ENCODE measurements at regions of chr17 and their contacts with region 1.

Region 1: GRCh38 chr17:13442361-13442760 is 159.4 kb downstream of the HS3ST3A1 start:
- DNase-seq: no peak
- ATAC-seq: no peak
- H3K4me3 ChIP-seq: no peak overlapping the region
- H3K27ac ChIP-seq: no peak overlapping the region
- H3K4me1 ChIP-seq: no peaks in the 10 kb centered on the region
- H3K27me3 ChIP-seq: no peaks in the 10 kb centered on the region
- CTCF ChIP-seq: no peak
- POLR2A ChIP-seq: no peak

Region 2: DNA sequence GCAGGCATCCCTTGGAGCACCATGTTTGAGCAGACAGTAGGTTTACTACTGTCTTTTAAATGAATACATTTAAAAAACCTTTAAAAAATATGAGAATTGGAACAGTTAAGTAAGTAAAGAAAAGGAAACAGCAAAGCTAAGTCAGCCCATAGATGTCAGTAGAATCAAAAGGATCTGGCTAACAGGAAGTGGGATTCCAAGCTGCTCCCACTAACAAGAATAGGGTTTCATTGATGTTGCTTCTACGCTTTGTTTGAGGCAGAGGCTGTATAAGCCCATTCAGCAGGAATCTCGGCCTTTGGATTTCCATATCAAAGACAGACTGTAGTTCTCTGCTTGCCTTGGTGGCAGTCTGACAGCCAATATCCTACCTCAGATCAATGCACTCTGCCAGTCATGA is 301.6 kb before region 1 on chr17:
- in situ Hi-C with region 1: no loop called
- intact Hi-C with region 1: no loop called
- DNase-seq: no peak
- ATAC-seq: no peak
- H3K4me3 ChIP-seq: no peak overlapping the region
- H3K27ac ChIP-seq: no peak overlapping the region
- H3K4me1 ChIP-seq: no peaks in the 10 kb centered on the region
- H3K27me3 ChIP-seq: no peaks in the 10 kb centered on the region
- CTCF ChIP-seq: no peak
- POLR2A ChIP-seq: no peak

Region 3: GRCh38 chr17:13385481-13385911 is 56.9 kb before region 1 on chr17:
- in situ Hi-C with region 1: no loop called
- intact Hi-C with region 1: loop called (anchors 10 kb)
- DNase-seq: no peak
- ATAC-seq: no peak
- H3K4me3 ChIP-seq: no peak overlapping the region
- H3K27ac ChIP-seq: no peak overlapping the region
- H3K4me1 ChIP-seq: no peaks in the 10 kb centered on the region
- H3K27me3 ChIP-seq: no peaks in the 10 kb centered on the region
- CTCF ChIP-seq: no peak
- POLR2A ChIP-seq: no peak

Region 4: DNA sequence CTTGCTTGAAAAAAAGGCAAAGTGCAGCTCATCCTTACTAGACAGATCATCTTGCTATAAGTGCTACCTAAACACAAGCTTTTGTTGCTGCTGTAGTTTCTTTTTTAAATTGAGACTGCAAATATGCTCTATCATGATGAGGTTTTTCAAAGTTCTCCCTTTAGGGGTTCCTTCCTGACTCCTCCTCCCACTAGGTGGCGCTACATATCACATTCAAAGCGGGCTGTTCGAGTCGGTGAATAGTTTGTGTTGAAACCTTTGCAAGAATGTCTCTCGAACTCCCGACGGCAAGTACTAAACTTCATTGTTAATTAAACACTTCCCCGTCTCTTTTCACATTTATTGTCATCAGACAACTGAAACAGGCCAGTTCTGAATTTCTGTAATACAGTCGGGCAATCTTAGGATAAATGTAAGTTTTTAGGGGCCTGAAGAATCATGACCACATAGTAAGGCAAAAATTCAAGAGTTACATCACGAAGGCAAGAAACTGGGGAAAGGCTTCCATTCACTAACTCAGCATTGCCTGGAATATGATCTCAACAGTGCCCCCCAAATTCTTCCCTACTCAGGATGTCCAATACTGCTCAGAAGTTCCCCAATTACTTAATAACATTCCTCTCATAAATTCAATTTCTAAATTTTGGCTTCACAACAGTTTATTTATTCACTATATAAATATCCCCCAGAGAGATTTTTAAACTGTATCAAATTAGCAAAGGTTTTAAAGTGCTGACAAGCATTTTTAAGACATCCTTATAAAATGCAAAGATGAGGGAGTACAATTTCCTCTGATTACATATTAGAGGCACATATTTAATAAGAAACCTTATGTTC is 152.6 kb after region 1 on chr17:
- in situ Hi-C with region 1: no loop called
- intact Hi-C with region 1: no loop called
- DNase-seq: peak; percentile 51 to 60
- ATAC-seq: peak in 1 of 2 donors; percentile 90
- H3K4me3 ChIP-seq: no peak overlapping the region
- H3K27ac ChIP-seq: no peak overlapping the region
- H3K4me1 ChIP-seq: peaks cover 0 to 8% of the 10 kb centered on the region in 2 donors
- H3K27me3 ChIP-seq: peaks cover 0 to 13% (median 11%) of the 10 kb centered on the region in 3 donors
- CTCF ChIP-seq: peak; percentile 62 to 91 (median 73)
- POLR2A ChIP-seq: no peak